K562 (cell line): ENCODE measurements at regions of chr3 and their contacts with region 1.

Region 1: GRCh38 chr3:171566803-171567422 is 106.7 kb upstream of the TNIK start:
- DNase-seq: peak; percentile 53 to 64 (median 62)
- ATAC-seq: peak; percentile 79
- H3K4me3 ChIP-seq: no peak overlapping the region
- H3K27ac ChIP-seq: no peak overlapping the region
- H3K4me1 ChIP-seq: no peaks in the 10 kb centered on the region
- H3K27me3 ChIP-seq: no peaks in the 10 kb centered on the region
- CTCF ChIP-seq: peak; percentile 58 to 91 (median 68); a peak in 5 of 6 replicates
- EP300 ChIP-seq: no peak
- POLR2A ChIP-seq: no peak
- RAD21 ChIP-seq: peak; percentile 93 to 97

Region 2: DNA sequence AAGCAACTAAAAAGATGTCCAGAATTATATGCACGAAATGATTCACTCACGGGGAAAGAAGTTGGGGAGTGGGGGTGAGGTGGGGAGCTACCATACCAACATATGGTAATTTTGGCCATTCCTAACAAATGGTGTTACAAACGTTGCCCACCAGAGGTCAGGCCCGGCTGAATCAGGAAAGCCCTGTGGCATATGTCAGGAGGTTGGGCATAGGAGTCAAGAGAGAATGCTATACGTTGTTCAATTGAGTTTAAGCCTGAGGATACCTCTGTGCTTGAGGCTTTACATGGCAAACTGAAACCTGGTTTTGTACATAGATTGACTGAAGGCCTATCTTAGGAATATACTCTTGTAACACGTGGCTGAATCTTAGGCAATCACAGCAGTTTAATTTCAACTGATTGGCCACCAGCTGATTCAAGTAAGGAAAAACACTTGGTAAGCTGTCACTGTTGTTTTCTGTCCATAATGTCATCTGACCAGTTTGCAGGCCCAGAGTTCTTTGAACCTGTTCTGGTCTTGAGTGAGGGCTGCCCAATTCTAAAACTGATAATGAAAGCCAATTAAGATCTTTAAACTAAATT is 517.0 kb before region 1 on chr3:
- CTCF ChIA-PET with region 1: interaction called, 9 read pairs
- POLR2A ChIA-PET with region 1: no interaction called
- in situ Hi-C with region 1: loop called (anchors 10 kb)
- intact Hi-C with region 1: loop called (anchors 1 kb)
- DNase-seq: peak; percentile 27 to 65 (median 45)
- ATAC-seq: peak; percentile 94
- H3K4me3 ChIP-seq: no peak overlapping the region
- H3K27ac ChIP-seq: no peak overlapping the region
- H3K4me1 ChIP-seq: no peaks in the 10 kb centered on the region
- H3K27me3 ChIP-seq: 0 out of 5 replicates have a peak, but pooled peaks cover 0 to 2% of the 10 kb centered on the region in 2 experiments
- CTCF ChIP-seq: peak; percentile 72 to 83 (median 78)
- EP300 ChIP-seq: no peak
- POLR2A ChIP-seq: no peak
- RAD21 ChIP-seq: peak; percentile 75 to 90

Region 3: GRCh38 chr3:171157286-171157685 is 409.6 kb before region 1 on chr3:
- CTCF ChIA-PET with region 1: no interaction called
- POLR2A ChIA-PET with region 1: no interaction called
- in situ Hi-C with region 1: no loop called
- intact Hi-C with region 1: loop called (anchors 5 kb)
- DNase-seq: peak in 1 of 4 experiments; percentile 27
- ATAC-seq: no peak
- H3K4me3 ChIP-seq: no peak overlapping the region
- H3K27ac ChIP-seq: no peak overlapping the region
- H3K4me1 ChIP-seq: peaks cover 27 to 38% of the 10 kb centered on the region in 2 experiments
- H3K27me3 ChIP-seq: no peaks in the 10 kb centered on the region
- CTCF ChIP-seq: no peak
- EP300 ChIP-seq: no peak
- POLR2A ChIP-seq: no peak
- RAD21 ChIP-seq: no peak; a peak in 1 of 4 replicates

Region 4: GRCh38 chr3:171162986-171163723 is 403.8 kb before region 1 on chr3:
- CTCF ChIA-PET with region 1: interaction called, 13 read pairs
- POLR2A ChIA-PET with region 1: no interaction called
- in situ Hi-C with region 1: no loop called
- intact Hi-C with region 1: loop called (anchors 5 kb)
- DNase-seq: peak; percentile 27 to 56 (median 40)
- ATAC-seq: no peak
- H3K4me3 ChIP-seq: no peak overlapping the region
- H3K27ac ChIP-seq: no peak overlapping the region
- H3K4me1 ChIP-seq: peaks cover 11 to 23% of the 10 kb centered on the region in 2 experiments
- H3K27me3 ChIP-seq: no peaks in the 10 kb centered on the region
- CTCF ChIP-seq: peak; percentile 54 to 67 (median 67); a peak in 5 of 6 replicates
- EP300 ChIP-seq: no peak
- POLR2A ChIP-seq: no peak
- RAD21 ChIP-seq: peak; percentile 69 to 81

Region 5: GRCh38 chr3:171187706-171188290 is 379.1 kb before region 1 on chr3:
- CTCF ChIA-PET with region 1: interaction called, 17 read pairs
- POLR2A ChIA-PET with region 1: interaction called, 3 read pairs
- in situ Hi-C with region 1: loop called (anchors 5 kb)
- intact Hi-C with region 1: loop called (anchors 2 kb)
- DNase-seq: peak; percentile 32 to 63 (median 46)
- ATAC-seq: peak; percentile 62
- H3K4me3 ChIP-seq: no peak overlapping the region
- H3K27ac ChIP-seq: no peak overlapping the region
- H3K4me1 ChIP-seq: peaks cover 4 to 35% of the 10 kb centered on the region in 2 experiments
- H3K27me3 ChIP-seq: no peaks in the 10 kb centered on the region
- CTCF ChIP-seq: peak; percentile 67 to 71 (median 70)
- EP300 ChIP-seq: no peak
- POLR2A ChIP-seq: no peak
- RAD21 ChIP-seq: peak; percentile 67 to 81

Region 6: GRCh38 chr3:171334465-171334811 is 232.5 kb before region 1 on chr3:
- CTCF ChIA-PET with region 1: no interaction called
- POLR2A ChIA-PET with region 1: no interaction called
- in situ Hi-C with region 1: no loop called
- intact Hi-C with region 1: loop called (anchors 5 kb)
- DNase-seq: no peak
- ATAC-seq: peak; percentile 19; the same call in 2 of the 3 replicates
- H3K4me3 ChIP-seq: no peak overlapping the region
- H3K27ac ChIP-seq: peak overlapping the region; percentile 58
- H3K4me1 ChIP-seq: peaks cover 9 to 15% of the 10 kb centered on the region in 2 experiments; a peak in 3 of 5 replicates
- H3K27me3 ChIP-seq: no peaks in the 10 kb centered on the region
- CTCF ChIP-seq: no peak
- EP300 ChIP-seq: no peak
- POLR2A ChIP-seq: no peak
- RAD21 ChIP-seq: no peak